T-cell (primary cell): ENCODE measurements at regions of chr3 and their contacts with region 1.

Region 1: DNA sequence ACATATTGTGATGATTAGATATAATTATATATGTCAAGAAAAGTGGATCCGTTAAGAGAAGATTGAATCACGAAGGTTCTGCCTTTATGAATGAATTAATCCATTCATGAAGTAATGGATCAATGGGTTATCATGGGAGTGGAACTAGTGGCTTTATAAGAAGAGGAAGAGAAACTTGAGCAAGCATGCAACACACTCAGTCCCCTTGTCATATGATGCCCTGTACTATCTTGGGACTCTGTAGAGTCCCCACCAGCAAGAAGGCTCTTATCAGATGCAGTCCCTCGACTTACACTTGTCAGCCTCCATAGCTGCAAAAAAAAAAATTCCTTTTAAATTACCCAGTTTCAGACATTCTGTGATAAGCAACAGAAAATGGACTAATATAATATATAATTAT is 301.9 kb downstream of the RAP2B start:
- DNase-seq: no peak
- ATAC-seq: no peak
- H3K4me3 ChIP-seq: no peak overlapping the region
- H3K4me3 Mint-ChIP-seq: no peak overlapping the region
- H3K27ac ChIP-seq: no peak overlapping the region
- H3K27ac Mint-ChIP-seq: no peak overlapping the region
- H3K4me1 ChIP-seq: peaks cover 4 to 9% of the 10 kb centered on the region in 2 experiments
- H3K4me1 Mint-ChIP-seq: peaks cover 33 to 39% (median 37%) of the 10 kb centered on the region in 3 donors
- H3K27me3 ChIP-seq: no peaks in the 10 kb centered on the region
- H3K27me3 Mint-ChIP-seq: no peaks in the 10 kb centered on the region

Region 2: DNA sequence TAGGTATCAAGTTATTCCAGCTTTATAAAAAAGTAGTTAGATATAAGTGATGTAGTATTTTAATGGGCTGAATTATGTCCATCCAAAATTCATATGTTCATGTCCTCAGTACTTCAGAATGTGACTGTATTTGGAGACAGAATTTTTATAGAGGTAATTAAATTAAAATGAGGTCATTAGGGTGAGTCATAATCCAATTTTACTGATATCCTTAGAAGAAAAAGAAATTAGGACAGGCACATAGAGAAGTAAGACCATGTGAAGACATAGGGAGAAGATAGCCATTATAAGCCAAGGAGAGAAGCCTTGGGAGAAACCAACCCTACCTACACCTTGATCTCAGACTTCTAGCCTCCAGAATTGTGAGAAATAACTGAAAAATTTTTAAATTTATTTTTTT is 271.6 kb before region 1 on chr3:
- CTCF ChIA-PET with region 1: no interaction called
- POLR2A ChIA-PET with region 1: interaction called in 1 of 2 experiments, 13 read pairs
- DNase-seq: no peak
- ATAC-seq: no peak
- H3K4me3 ChIP-seq: no peak overlapping the region
- H3K4me3 Mint-ChIP-seq: no peak overlapping the region
- H3K27ac ChIP-seq: no peak overlapping the region
- H3K27ac Mint-ChIP-seq: no peak overlapping the region
- H3K4me1 ChIP-seq: no peaks in the 10 kb centered on the region
- H3K4me1 Mint-ChIP-seq: peaks cover 0 to 6% (median 2%) of the 10 kb centered on the region in 3 donors
- H3K27me3 ChIP-seq: no peaks in the 10 kb centered on the region
- H3K27me3 Mint-ChIP-seq: no peaks in the 10 kb centered on the region